GM10248 (cell line): ENCODE measurements at regions of chr5 and their contacts with region 1.

Region 1: GRCh38 chr5:59506285-59506877 is 387.1 kb downstream of the PDE4D start:
- DNase-seq: no peak
- CTCF ChIP-seq: peak; percentile 17

Region 2: DNA sequence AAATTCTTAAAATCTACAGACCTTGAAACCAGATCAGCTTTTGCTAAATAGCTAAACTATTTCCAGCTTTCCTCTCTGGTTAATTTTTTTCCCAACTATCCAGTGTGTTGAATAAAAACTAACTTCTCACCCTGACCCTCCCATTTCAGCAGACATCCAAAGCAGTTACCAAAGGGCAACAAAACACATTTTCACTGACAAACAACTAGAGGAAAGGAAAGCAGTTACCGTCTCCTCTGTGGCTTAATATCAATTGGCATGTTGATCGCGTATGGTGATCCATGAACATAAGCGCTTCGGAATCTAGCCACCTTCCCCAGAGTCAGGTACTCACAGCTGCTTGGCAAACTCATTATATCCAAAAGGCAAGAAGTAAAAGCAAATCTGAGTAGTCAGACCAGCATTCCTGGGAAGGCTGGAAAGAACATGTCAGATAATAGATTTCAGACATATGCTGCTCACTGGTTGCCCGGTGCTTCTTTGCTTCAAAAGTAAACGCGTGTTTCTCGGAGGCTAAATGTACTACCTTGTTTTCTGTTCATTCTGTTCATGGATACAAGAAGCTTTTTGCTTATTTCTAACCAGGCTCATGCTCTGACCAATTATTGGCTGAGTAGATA is 76.2 kb before region 1 on chr5:
- CTCF ChIA-PET with region 1: no interaction called
- POLR2A ChIA-PET with region 1: no interaction called
- DNase-seq: no peak
- CTCF ChIP-seq: no peak

Region 3: GRCh38 chr5:59487772-59488729 is 18.3 kb before region 1 on chr5:
- CTCF ChIA-PET with region 1: interaction called, 19 read pairs
- POLR2A ChIA-PET with region 1: no interaction called
- DNase-seq: no peak
- CTCF ChIP-seq: no peak

Region 4: GRCh38 chr5:59569608-59570334 is 63.4 kb after region 1 on chr5:
- CTCF ChIA-PET with region 1: no interaction called
- POLR2A ChIA-PET with region 1: no interaction called
- DNase-seq: no peak
- CTCF ChIP-seq: no peak

Region 5: DNA sequence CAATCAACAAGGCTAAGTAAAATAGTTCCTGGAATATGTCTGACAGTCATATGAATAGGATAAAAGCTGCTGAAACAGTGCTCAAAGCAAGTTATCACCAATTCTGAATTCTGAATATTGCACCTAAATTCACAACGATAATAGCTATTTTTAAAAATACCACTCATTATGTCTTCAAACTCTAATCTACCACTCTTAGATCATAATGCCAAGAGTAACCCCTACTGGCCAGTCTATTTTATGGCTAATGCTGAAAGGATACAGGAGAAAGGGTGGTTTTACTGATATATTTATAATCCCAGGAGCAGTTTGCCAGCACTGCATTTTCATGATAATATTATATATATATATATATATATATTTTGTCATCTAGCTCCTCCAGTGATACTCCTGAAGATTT is 154.4 kb after region 1 on chr5:
- CTCF ChIA-PET with region 1: interaction called, 27 read pairs
- POLR2A ChIA-PET with region 1: no interaction called
- DNase-seq: peak; percentile 20
- CTCF ChIP-seq: peak; percentile 50

Region 6: DNA sequence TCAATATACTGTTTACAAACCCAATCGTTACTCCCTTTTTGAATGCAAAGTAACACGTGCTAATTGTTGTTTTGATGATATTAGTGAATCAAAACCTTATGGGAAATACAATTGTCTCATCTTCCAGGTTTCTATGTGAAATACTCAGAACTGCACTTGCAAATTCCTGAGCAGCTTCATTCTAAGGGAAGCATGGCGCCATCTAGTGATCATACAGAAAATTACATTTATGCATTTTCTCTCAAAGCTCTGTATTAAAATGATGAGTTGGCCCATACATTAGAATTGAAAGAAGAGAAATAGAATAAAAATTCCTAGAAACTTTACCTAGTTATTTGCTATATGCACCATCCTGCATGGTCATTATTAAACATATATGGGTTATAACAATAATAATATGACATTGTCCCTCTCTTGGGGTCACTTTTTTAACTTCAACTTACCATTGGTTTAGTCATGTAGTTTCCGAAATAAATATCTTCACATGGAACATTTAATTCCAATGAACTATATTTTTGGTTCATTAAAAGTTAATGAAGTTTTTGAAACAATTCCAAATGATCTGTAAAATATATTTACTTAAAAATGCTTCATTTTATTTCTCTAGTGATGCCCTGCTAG is 167.2 kb after region 1 on chr5:
- CTCF ChIA-PET with region 1: interaction called, 35 read pairs
- POLR2A ChIA-PET with region 1: no interaction called
- DNase-seq: peak; percentile 22
- CTCF ChIP-seq: peak; percentile 62

Region 7: GRCh38 chr5:59799668-59800346 is 293.4 kb after region 1 on chr5:
- CTCF ChIA-PET with region 1: interaction called, 17 read pairs
- POLR2A ChIA-PET with region 1: no interaction called
- DNase-seq: peak; percentile 21
- CTCF ChIP-seq: peak; percentile 60